Prostate gland (tissue), 2 donors: ENCODE measurements at regions of chr7 and their contacts with region 1.

Region 1: GRCh38 chr7:80659120-80660055 is 20.9 kb downstream of the CD36 start:
- DNase-seq: no peak
- H3K4me3 ChIP-seq: no peak overlapping the region
- H3K27ac ChIP-seq: no peak overlapping the region
- H3K4me1 ChIP-seq: no peaks in the 10 kb centered on the region
- H3K27me3 ChIP-seq: no peaks in the 10 kb centered on the region
- CTCF ChIP-seq: peak; percentile 57 to 84 (median 80)
- POLR2A ChIP-seq: no peak

Region 2: DNA sequence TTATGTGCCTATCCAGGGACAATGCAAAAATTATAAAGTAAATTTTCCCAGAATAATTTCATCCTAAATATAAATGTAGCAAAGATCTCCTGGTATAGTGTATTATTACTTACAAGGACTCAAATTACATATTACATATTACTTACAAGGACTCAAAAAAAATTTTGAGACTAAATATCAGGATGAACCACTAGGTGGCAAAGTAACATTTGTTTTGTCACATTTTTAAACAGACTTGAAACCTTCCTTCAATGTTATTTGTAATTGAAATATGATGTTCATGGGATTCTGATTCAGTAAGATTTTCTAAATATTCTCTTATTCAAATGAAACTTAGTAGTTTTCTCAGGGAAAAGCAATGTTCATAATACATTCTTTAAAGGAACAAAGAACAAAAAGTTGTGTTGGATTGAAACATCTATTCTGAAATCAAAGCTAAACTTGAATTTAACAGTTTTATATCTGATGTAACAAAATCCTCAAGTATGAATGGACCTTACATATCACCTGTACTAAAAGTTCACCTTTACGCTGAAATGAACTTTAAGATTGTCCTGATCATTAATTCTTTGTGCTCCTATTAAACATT is 599.1 kb before region 1 on chr7:
- intact Hi-C with region 1: loop called (anchors 10 kb)
- DNase-seq: no peak
- H3K4me3 ChIP-seq: no peak overlapping the region
- H3K27ac ChIP-seq: no peak overlapping the region
- H3K4me1 ChIP-seq: no peaks in the 10 kb centered on the region
- H3K27me3 ChIP-seq: no peaks in the 10 kb centered on the region
- CTCF ChIP-seq: peak; percentile 17 to 64 (median 52)
- POLR2A ChIP-seq: no peak

Region 3: DNA sequence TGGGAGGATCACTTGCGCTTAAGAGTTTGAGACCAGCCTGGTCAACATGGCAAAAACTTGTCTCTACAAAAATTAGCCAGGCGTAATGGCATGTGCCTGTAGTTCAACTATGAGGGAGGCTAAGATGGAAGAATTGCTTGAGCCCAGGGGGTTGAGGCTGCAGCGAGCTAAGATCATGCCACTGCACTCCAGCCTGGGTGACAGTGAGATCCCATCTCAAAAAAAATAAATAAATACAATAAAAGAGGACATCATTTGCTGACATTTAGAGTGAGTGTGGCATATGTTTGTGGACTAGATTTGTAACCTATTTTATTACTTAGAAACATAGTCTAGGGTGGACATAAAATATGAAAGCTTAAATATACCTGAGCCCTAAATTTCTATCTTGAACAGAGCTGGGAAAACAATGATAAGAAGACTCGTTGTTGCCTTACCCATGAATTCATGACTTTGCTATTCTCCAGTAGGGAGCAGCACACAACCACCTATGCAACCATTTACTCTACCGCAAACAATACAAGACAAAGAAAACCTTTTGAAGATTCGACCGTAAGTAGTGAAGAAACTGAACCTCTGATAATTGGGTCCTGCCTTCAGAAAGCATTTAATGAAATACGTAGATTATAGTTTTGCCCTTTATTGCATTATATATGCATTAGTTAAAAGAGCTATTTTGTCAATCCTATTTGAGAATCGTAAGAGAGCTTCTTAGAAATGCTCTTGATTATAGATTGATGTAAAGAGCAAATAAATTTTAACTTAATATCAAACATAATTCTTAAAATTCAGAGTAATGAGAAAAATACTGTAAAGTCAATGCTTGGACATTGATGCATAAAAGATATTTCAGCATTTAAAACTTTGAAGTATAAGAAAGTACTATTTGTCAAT is 231.0 kb before region 1 on chr7:
- intact Hi-C with region 1: loop called (anchors 5 kb)
- DNase-seq: peak; percentile 24
- H3K4me3 ChIP-seq: no peak overlapping the region
- H3K27ac ChIP-seq: no peak overlapping the region
- H3K4me1 ChIP-seq: no peaks in the 10 kb centered on the region
- H3K27me3 ChIP-seq: no peaks in the 10 kb centered on the region
- CTCF ChIP-seq: peak in 3 of 4 experiments; percentile 47 to 74 (median 72)
- POLR2A ChIP-seq: no peak

Region 4: GRCh38 chr7:80593869-80594582 is 65.4 kb before region 1 on chr7:
- intact Hi-C with region 1: no loop called
- DNase-seq: no peak
- H3K4me3 ChIP-seq: no peak overlapping the region
- H3K27ac ChIP-seq: no peak overlapping the region
- H3K4me1 ChIP-seq: no peaks in the 10 kb centered on the region
- H3K27me3 ChIP-seq: no peaks in the 10 kb centered on the region
- CTCF ChIP-seq: no peak
- POLR2A ChIP-seq: no peak